ENCODE measurements at regions of chr11 and their contacts with region 1.

Region 1: DNA sequence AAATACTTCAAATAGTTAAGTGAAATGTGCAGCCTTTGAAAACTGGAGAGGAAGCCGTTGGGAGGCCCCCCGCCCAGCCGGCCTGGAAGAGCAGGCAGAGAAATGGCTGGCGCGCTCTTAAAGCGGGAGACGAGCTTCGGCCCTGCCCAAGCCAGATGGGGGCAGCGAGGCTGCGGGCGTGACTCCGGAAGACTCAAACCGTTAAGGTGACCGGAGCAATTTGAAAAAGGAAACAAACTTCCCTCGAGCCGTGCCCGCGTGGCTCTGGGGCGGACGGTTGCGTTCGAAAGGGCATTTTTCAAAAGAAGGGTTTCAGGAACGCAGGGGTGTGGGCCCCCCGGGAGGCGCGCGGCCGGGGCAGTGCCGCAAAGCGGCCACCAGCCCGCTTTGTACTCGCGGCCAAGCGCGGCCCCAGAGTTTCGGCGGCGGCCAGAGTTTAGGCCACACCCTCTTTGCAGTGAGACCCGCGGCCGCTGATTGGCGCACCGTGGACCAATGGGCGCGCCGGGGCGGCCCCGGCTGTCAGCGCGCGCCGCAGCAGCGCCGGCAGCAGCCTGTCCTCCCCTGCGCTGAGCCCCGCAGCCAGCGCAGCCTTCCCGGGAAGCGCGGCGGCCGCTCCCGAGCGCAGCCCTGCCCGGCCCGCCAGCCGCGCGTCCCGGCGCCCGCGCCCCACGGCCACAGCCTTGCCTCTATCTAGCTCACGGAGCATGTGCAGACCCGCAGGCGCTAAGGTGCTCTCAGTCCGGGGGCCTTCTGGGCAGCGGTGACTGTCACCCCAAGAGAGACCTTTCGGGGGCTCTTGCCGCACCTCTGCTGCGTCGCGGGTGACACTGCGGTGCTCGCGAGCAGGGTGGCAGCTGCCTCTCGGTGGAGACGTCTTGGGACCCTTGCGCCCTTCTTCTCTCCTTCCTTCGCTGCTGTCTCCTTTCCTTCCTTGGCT is at the start of gene NAV2:
- DNase-seq: peak; percentile 93
- H3K4me3 ChIP-seq: peak within 1 kb of the TSS; percentile 56 to 86 (median 84)
- H3K27ac ChIP-seq: peak within 1 kb of the TSS; percentile 93
- H3K4me1 ChIP-seq: peaks cover 40% of the 10 kb centered on the region
- H3K27me3 ChIP-seq: no peaks in the 10 kb centered on the region
- CTCF ChIP-seq: no peak
- POLR2A ChIP-seq: peak; percentile 98
- total RNA-seq, gene NAV2: 45.8 and 68.0 TPM in 2 replicates

Region 2: GRCh38 chr11:18395735-18396504 is 1316.6 kb before region 1 on chr11:
- CTCF ChIA-PET with region 1: no interaction called
- POLR2A ChIA-PET with region 1: interaction called, 3 read pairs
- dilution Hi-C with region 1: no loop called
- intact Hi-C with region 1: loop called (anchors 10 kb)
- DNase-seq: peak; percentile 100
- H3K4me3 ChIP-seq: peak overlapping the region; percentile 42 to 80 (median 65)
- H3K27ac ChIP-seq: peak overlapping the region; percentile 56
- H3K4me1 ChIP-seq: peaks cover 18% of the 10 kb centered on the region
- H3K27me3 ChIP-seq: no peaks in the 10 kb centered on the region
- CTCF ChIP-seq: no peak
- POLR2A ChIP-seq: peak; percentile 83

Region 3: GRCh38 chr11:19546325-19546724 is 166.2 kb before region 1 on chr11:
- CTCF ChIA-PET with region 1: no interaction called
- POLR2A ChIA-PET with region 1: no interaction called
- dilution Hi-C with region 1: no loop called
- intact Hi-C with region 1: no loop called
- DNase-seq: no peak
- H3K4me3 ChIP-seq: no peak overlapping the region
- H3K27ac ChIP-seq: no peak overlapping the region
- H3K4me1 ChIP-seq: no peaks in the 10 kb centered on the region
- H3K27me3 ChIP-seq: no peaks in the 10 kb centered on the region
- CTCF ChIP-seq: no peak
- POLR2A ChIP-seq: no peak

Region 4: DNA sequence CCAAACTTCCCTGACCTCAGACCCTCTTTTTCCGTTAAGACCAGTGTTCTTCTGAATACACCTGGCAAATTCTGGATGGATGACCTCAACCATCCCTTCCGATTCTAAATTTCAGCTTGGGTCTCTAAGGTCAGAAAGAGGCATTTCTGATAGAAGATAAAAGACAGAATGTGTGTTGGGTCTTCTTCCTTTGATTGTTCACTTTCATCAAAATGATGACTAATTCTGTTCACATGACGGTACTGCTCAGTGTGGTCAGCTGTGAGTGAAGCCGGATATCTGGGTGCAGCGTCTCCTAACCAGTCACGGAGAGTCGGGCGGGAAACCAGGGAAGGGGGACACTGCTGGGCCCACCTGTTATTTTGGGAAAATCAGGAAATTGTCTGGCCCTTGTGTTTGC is 151.5 kb before region 1 on chr11:
- CTCF ChIA-PET with region 1: interaction called, 34 read pairs
- POLR2A ChIA-PET with region 1: no interaction called
- dilution Hi-C with region 1: no loop called
- intact Hi-C with region 1: loop called (anchors 1 kb)
- DNase-seq: peak; percentile 81
- H3K4me3 ChIP-seq: no peak overlapping the region
- H3K27ac ChIP-seq: peak overlapping the region; percentile 61
- H3K4me1 ChIP-seq: peaks cover 23% of the 10 kb centered on the region
- H3K27me3 ChIP-seq: no peaks in the 10 kb centered on the region
- CTCF ChIP-seq: no peak
- POLR2A ChIP-seq: no peak

Region 5: GRCh38 chr11:19595840-19596751 is 116.5 kb before region 1 on chr11:
- CTCF ChIA-PET with region 1: interaction called, 17 read pairs
- POLR2A ChIA-PET with region 1: interaction called, 5 read pairs
- dilution Hi-C with region 1: no loop called
- intact Hi-C with region 1: loop called (anchors 1 kb)
- DNase-seq: peak; percentile 91
- H3K4me3 ChIP-seq: no peak overlapping the region
- H3K27ac ChIP-seq: peak overlapping the region; percentile 95
- H3K4me1 ChIP-seq: peaks cover 34% of the 10 kb centered on the region
- H3K27me3 ChIP-seq: no peaks in the 10 kb centered on the region
- CTCF ChIP-seq: no peak
- POLR2A ChIP-seq: no peak

Region 6: DNA sequence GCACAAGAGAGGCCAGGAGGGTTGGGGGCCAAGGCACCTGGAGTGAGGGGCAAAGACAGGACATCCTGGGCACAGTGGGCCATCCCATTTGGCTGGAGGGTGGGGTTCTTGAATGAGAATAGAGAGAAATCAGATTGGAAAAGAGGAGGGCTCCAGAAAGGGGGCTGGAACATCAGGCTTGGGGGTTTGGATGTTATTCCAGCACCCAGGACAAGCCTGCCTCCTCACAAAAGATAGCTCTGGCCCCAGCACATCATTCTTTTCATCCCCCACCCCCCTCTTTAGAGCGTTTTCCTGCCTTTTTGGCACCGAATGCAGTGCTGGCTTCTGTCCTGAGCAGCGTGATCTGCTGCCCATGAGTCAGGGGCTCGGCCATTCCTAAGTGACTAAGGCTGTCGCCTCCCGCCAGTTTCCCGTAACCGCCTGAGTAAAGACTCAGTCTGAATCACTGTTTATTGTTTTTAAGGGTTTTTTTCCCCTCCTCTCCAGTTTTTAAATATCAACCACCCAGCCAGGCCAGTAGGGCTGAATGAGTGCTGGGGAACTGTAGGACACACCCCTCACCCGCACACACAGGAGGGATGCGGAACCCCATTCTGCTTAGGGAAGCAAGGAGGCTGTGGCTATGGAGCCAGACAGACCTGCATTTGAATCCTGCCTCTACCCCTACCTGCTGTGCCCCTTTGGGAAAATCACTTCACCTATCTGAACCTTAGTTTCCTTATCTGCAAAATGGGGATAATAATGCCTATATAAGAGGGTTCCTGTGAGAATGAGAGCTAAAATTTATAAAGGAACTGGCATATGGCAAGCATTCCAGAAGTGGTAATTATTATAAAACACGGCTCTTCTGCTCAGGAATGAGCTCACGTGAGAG is 32.4 kb before region 1 on chr11:
- CTCF ChIA-PET with region 1: interaction called, 3 read pairs
- POLR2A ChIA-PET with region 1: no interaction called
- dilution Hi-C with region 1: no loop called
- intact Hi-C with region 1: loop called (anchors 1 kb)
- DNase-seq: peak; percentile 98
- H3K4me3 ChIP-seq: no peak overlapping the region
- H3K27ac ChIP-seq: peak overlapping the region; percentile 99
- H3K4me1 ChIP-seq: peaks cover 49% of the 10 kb centered on the region
- H3K27me3 ChIP-seq: no peaks in the 10 kb centered on the region
- CTCF ChIP-seq: no peak
- POLR2A ChIP-seq: no peak

Region 7: DNA sequence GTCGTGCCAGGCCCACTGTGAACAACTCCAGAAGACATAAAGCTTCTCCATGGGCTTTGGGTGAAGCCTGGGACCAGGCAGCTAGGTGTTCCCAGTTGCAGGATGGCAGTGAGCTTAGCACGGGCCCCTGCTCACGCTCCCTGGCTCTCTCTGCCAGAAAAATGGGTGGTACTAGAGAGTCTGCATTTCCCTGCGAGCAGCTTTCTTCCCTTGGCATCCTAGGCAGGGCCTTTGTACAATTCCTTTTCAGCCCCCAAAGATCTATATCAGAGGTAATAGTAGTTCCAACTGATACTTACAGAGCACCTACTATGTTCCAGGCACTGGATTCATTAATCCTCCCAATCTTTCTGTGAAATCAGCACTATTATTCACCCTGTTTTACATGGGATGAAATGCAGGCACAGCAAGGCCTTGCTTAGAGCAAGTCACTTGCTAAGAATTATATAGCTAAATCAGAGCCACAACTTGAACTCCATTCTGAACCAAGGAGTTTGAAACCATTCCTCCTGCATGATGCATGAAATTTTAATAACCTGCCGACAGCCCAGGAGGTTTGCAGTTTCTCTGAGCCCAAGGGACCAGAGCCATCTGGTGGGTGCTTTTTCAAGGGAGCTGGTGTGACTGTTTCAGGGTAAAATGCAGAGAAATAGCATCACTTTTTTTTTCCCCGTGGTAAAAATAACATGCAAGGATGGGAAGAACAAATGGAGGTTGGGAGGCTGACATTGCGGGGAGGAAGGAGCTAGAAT is 22.8 kb after region 1 on chr11:
- CTCF ChIA-PET with region 1: interaction called, 14 read pairs
- POLR2A ChIA-PET with region 1: no interaction called
- dilution Hi-C with region 1: no loop called
- intact Hi-C with region 1: no loop called
- DNase-seq: no peak
- H3K4me3 ChIP-seq: no peak overlapping the region
- H3K27ac ChIP-seq: no peak overlapping the region
- H3K4me1 ChIP-seq: peaks cover 5% of the 10 kb centered on the region
- H3K27me3 ChIP-seq: no peaks in the 10 kb centered on the region
- CTCF ChIP-seq: no peak
- POLR2A ChIP-seq: no peak

Region 8: GRCh38 chr11:19777377-19778102 is 65.0 kb after region 1 on chr11:
- CTCF ChIA-PET with region 1: no interaction called
- POLR2A ChIA-PET with region 1: no interaction called
- dilution Hi-C with region 1: no loop called
- intact Hi-C with region 1: loop called (anchors 2 kb)
- DNase-seq: peak; percentile 82
- H3K4me3 ChIP-seq: peak overlapping the region; percentile 18 to 60 (median 57)
- H3K27ac ChIP-seq: peak overlapping the region; percentile 38
- H3K4me1 ChIP-seq: peaks cover 14% of the 10 kb centered on the region
- H3K27me3 ChIP-seq: no peaks in the 10 kb centered on the region
- CTCF ChIP-seq: no peak
- POLR2A ChIP-seq: no peak